ENCODE measurements at regions of chr1 and their contacts with region 1.

Region 1: GRCh38 chr1:210143465-210144062 is 89.0 kb upstream of the SERTAD4 start:
- DNase-seq: peak; percentile 90
- H3K4me3 ChIP-seq: no peak overlapping the region
- H3K27ac ChIP-seq: no peak overlapping the region
- H3K4me1 ChIP-seq: no peaks in the 10 kb centered on the region
- H3K27me3 ChIP-seq: no peaks in the 10 kb centered on the region
- CTCF ChIP-seq: peak; percentile 40 to 48 (median 47)
- POLR2A ChIP-seq: no peak

Region 2: GRCh38 chr1:210301615-210302000 is 158.0 kb after region 1 on chr1:
- intact Hi-C with region 1: loop called (anchors 10 kb)
- DNase-seq: no peak
- H3K4me3 ChIP-seq: no peak overlapping the region
- H3K27ac ChIP-seq: no peak overlapping the region
- H3K4me1 ChIP-seq: no peaks in the 10 kb centered on the region
- H3K27me3 ChIP-seq: no peaks in the 10 kb centered on the region
- CTCF ChIP-seq: no peak
- POLR2A ChIP-seq: no peak

Measured in testis (tissue), 5 donors.